ENCODE measurements at regions of chr11 and their contacts with region 1.

Region 1: GRCh38 chr11:67265633-67266423 is 445 bp upstream of the GRK2 start:
- DNase-seq: peak; percentile 79 to 92 (median 82)
- ATAC-seq: peak; percentile 19 to 71 (median 60)
- H3K4me3 ChIP-seq: peak overlapping the region in 9 of 12 donors; percentile 18 to 76 (median 38)
- H3K27ac ChIP-seq: peak overlapping the region in 10 of 12 donors; percentile 53 to 84 (median 74)
- H3K4me1 ChIP-seq: peaks cover 21 to 76% (median 56%) of the 10 kb centered on the region in 12 donors
- H3K27me3 ChIP-seq: no peaks in the 10 kb centered on the region
- CTCF ChIP-seq: peak in 11 of 12 donors; percentile 62 to 82 (median 73)
- POLR2A ChIP-seq: no peak

Region 2: DNA sequence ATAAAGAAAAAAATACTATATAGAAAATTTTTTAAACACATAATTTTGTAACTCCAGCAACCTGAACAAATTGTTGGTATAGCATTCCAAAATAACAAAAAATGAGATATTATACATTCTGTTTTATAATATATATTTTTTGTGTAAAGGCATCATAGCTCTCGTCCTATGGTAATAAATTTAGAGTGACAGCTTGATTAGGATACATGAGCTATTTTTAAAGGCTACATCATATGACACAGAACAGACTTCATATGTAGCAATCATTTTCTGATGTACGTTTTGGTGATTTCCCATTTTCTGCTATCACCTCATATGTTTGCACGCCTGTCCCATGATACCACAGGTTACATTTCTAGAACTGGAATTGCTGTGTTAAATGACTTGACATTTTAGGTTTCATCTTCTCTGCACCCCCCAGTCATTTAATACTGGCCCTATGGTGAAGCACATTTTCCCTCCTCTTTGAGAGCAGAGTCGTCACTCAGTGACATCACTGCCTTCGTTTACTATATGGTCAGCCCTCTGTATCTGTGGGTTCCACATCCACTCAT is 327.2 kb before region 1 on chr11:
- intact Hi-C with region 1: no loop called
- DNase-seq: no peak
- ATAC-seq: no peak
- H3K4me3 ChIP-seq: no peak overlapping the region
- H3K27ac ChIP-seq: no peak overlapping the region
- H3K4me1 ChIP-seq: no peaks in the 10 kb centered on the region
- H3K27me3 ChIP-seq: no peaks in the 10 kb centered on the region
- CTCF ChIP-seq: no peak
- POLR2A ChIP-seq: no peak

Region 3: DNA sequence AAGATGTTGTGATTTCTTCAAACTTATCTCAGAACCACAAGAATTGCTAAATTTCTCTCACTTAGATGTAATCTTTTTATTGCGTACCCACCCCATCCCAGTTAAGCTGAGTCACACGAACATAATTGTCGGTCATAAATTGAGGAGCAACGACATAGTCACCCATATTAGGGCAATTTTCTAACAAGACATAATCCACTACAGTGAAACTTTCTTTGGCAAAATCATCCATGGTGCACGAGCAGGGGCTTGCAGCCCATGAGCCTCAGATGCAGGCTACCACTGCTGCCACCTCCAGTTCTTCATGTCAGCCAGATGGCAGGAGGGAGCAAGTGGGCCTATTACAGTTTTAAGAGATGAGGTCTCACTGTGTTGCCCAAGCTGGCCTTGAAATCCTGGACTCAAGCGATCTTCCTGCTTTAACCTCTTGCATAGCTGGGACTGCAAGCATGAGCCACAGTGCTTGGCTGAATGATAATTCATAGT is 69.8 kb before region 1 on chr11:
- intact Hi-C with region 1: no loop called
- DNase-seq: no peak
- ATAC-seq: no peak
- H3K4me3 ChIP-seq: no peak overlapping the region
- H3K27ac ChIP-seq: no peak overlapping the region
- H3K4me1 ChIP-seq: peaks cover 0 to 26% (median 0%) of the 10 kb centered on the region in 12 donors
- H3K27me3 ChIP-seq: no peaks in the 10 kb centered on the region
- CTCF ChIP-seq: no peak
- POLR2A ChIP-seq: no peak

Region 4: DNA sequence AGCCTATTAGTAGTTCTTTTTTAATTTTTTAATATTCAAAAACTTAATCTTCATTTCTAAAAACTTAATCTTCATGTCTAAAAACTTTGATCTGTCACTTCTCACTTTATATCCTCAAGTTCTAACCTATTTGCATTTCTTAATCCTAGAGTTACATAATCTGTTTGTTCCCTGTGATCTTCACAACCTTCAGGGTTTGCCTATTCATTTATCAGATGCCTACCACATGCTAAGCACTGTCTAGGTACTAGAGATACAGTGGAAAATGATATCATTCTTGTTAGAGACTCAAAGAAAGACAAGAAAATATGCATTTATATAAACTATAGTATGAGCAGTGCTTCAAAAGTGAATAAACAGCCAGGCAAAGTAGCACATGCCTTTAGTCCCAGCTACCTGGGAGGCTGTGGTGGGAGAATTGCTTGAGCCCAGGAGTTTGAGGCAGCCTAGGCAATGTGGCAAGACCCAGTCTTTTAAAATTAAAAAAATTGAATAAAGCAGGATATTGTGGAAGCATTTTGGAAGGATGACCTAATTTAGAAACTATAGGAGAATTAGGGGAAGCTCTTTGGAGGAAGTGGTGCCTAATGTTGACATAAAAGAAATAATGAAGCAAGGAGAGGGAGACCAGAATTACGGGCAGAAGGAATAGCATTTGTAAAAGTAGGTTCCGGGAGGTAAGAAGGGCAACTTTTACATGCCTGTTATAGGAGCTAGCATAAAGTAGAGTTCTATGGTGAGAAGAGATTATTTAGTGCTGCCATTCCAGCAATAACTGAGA is 54.0 kb before region 1 on chr11:
- intact Hi-C with region 1: no loop called
- DNase-seq: no peak
- ATAC-seq: peak in 3 of 4 donors; percentile 18 to 45 (median 31)
- H3K4me3 ChIP-seq: no peak overlapping the region
- H3K27ac ChIP-seq: peak overlapping the region in 1 of 12 donors; percentile 71
- H3K4me1 ChIP-seq: peaks cover 0 to 22% (median 0%) of the 10 kb centered on the region in 12 donors
- H3K27me3 ChIP-seq: no peaks in the 10 kb centered on the region
- CTCF ChIP-seq: no peak
- POLR2A ChIP-seq: no peak

Region 5: GRCh38 chr11:67288452-67289225 is 22.8 kb after region 1 on chr11:
- intact Hi-C with region 1: loop called in 4 of 10 experiments (anchors 1 to 2 kb)
- DNase-seq: peak; percentile 91 to 94 (median 92)
- ATAC-seq: peak; percentile 48 to 87 (median 84)
- H3K4me3 ChIP-seq: peak overlapping the region; percentile 70 to 95 (median 86)
- H3K27ac ChIP-seq: peak overlapping the region; percentile 89 to 100 (median 94)
- H3K4me1 ChIP-seq: peaks cover 5 to 88% (median 31%) of the 10 kb centered on the region in 12 donors
- H3K27me3 ChIP-seq: no peaks in the 10 kb centered on the region
- CTCF ChIP-seq: peak; percentile 19 to 67 (median 54)
- POLR2A ChIP-seq: peak in 1 of 2 donors; percentile 48

Region 6: DNA sequence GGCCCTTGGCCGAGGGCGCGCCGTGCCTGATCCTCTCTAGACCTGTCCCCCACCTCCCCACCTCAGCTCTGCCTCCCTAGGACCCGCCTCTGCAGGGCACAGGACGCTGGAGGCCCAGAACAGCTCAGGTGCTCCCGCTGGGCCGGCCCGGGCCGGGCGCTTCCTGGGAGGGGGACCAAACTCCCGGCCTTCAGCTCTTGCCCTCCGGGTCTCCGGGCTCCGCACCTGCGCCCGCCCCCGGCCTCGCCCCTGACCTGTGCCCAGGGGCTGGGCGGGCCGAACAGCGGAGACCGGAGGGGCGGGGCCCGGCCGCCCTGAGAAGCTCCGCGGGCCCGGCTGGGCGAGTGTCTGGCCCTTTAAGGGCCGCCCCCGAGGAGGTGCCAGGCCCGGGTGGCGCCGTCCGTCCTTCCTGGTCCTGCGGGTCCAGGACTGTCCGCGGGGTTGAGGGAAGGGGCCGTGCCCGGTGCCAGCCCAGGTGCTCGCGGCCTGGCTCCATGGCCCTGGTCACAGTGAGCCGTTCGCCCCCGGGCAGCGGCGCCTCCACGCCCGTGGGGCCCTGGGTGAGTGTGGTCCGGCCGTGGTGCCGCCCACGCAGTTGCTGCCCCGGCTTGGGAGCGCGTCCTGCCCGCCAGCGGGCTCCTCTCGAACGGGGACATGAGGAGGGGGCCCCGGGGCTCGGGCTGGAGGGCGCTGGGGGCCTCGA is 37.5 kb after region 1 on chr11 and contains the start of gene SSH3:
- intact Hi-C with region 1: loop called in 1 of 10 experiments (anchors 5 kb)
- DNase-seq: peak; percentile 81 to 89 (median 83)
- ATAC-seq: peak; percentile 76 to 90 (median 88)
- H3K4me3 ChIP-seq: peak within 1 kb of the TSS; percentile 67 to 98 (median 92)
- H3K27ac ChIP-seq: peak within 1 kb of the TSS; percentile 20 to 89 (median 80)
- H3K4me1 ChIP-seq: peaks cover 8 to 35% (median 24%) of the 10 kb centered on the region in 12 donors
- H3K27me3 ChIP-seq: no peaks in the 10 kb centered on the region
- CTCF ChIP-seq: no peak
- POLR2A ChIP-seq: peak in 1 of 2 donors; percentile 65
- total RNA-seq, gene SSH3: 10.8 to 23.9 (median 16.8) TPM

Region 7: DNA sequence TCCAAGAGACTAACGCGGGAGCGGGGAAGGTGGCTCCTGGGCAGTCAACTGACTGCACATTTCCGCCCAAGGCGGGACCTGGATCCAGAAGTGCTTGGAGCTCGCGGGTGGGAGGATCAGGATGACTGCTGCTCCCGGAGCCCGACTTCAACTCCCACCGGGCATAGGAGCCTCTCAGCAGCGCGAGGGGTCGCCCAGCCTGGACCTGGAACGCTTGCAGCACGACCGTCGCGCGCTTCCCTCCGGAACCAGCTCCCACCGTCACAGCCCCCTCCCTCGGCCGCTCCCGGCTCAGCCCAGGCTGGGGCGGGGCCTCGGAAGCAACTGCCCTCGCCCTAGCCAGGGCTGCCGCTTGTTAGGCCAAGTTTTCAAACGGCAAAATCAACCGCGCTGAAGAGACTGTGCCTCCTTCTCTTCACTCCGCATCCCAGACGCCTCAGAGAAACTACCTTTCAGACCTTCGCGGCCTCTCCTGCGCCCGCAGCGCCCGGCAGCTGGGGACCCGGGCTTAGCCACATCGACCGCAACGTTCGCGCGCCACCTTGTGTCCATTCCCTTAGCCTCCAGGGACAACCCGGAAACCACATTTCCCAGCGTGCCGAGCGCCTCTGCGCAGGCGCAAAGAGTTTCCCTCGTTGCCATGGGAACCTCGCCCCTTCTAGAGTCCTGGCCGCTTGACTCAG is 51.5 kb after region 1 on chr11:
- intact Hi-C with region 1: loop called (anchors 1 to 2 kb)
- DNase-seq: peak; percentile 94 to 98 (median 96)
- ATAC-seq: peak; percentile 92 to 96 (median 94)
- H3K4me3 ChIP-seq: peak overlapping the region; percentile 69 to 97 (median 84)
- H3K27ac ChIP-seq: peak overlapping the region; percentile 68 to 98 (median 95)
- H3K4me1 ChIP-seq: peaks cover 0 to 26% (median 12%) of the 10 kb centered on the region in 12 donors
- H3K27me3 ChIP-seq: no peaks in the 10 kb centered on the region
- CTCF ChIP-seq: peak; percentile 86 to 99 (median 97)
- POLR2A ChIP-seq: peak in 1 of 2 donors; percentile 63

Region 8: GRCh38 chr11:67382276-67383136 is 116.7 kb after region 1 on chr11:
- intact Hi-C with region 1: loop called in 3 of 10 experiments (anchors 5 kb)
- DNase-seq: peak; percentile 76 to 87 (median 80)
- ATAC-seq: peak; percentile 72 to 88 (median 88)
- H3K4me3 ChIP-seq: no peak overlapping the region
- H3K27ac ChIP-seq: no peak overlapping the region
- H3K4me1 ChIP-seq: peaks cover 0 to 27% (median 5%) of the 10 kb centered on the region in 12 donors
- H3K27me3 ChIP-seq: no peaks in the 10 kb centered on the region
- CTCF ChIP-seq: peak; percentile 92 to 99 (median 96)
- POLR2A ChIP-seq: no peak

Region 9: GRCh38 chr11:67391304-67392132 is 125.7 kb after region 1 on chr11 and contains the start of gene RAD9A:
- intact Hi-C with region 1: loop called in 1 of 10 experiments (anchors 5 kb)
- DNase-seq: peak; percentile 96 to 99 (median 97)
- ATAC-seq: peak; percentile 65 to 89 (median 86)
- H3K4me3 ChIP-seq: peak within 1 kb of the TSS; percentile 51 to 93 (median 78)
- H3K27ac ChIP-seq: peak within 1 kb of the TSS; percentile 45 to 93 (median 81)
- H3K4me1 ChIP-seq: peaks cover 0 to 35% (median 16%) of the 10 kb centered on the region in 12 donors
- H3K27me3 ChIP-seq: no peaks in the 10 kb centered on the region
- CTCF ChIP-seq: no peak
- POLR2A ChIP-seq: peak in 1 of 2 donors; percentile 79
- total RNA-seq, gene RAD9A: 3.5 to 9.1 (median 5.8) TPM